ENCODE measurements at regions of chr1 and their contacts with region 1.

Region 1: DNA sequence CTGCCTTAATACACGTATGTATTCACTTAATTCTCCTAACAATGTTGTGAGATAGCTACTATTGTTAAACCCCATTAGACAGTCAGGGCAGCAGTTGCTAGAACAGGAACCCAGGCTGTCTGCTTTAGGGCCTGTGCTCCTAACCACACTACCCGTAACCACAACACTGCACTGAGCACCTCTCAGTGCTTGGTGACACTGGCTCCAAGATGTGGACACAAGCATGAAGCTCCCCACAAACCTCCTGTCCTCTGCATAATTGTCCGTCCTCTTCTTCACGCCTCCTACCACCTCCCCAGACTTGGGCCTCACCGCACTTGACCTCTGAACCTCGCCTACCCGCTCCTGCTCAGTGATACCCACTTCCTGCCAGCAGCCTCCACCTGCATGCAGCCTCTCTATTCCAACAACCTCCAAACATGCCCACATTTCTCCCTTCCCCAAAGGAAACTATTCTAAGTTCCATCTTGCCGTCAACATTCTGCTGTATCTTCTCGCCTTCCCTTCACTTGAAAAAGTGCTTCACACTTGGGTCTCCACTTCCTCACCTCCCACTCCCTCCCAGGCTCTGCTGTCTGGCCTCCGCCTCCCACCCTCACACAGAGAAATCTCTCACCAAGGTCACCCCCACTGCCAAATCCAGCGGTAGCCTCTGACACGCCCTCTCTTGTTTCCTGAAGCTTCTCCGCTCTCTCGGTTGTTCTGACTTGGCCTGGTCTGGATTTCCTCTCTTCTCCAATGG is 14.6 kb upstream of the AHDC1 start:
- DNase-seq: peak in 1 of 2 donors; percentile 83
- ATAC-seq: peak; percentile 77 to 92 (median 89)
- H3K4me3 ChIP-seq: no peak overlapping the region
- H3K4me3 Mint-ChIP-seq: peak overlapping the region; percentile 74
- H3K27ac ChIP-seq: peak overlapping the region; percentile 86
- H3K27ac Mint-ChIP-seq: peak overlapping the region in 1 of 2 donors; percentile 82
- H3K4me1 ChIP-seq: peaks cover 94% of the 10 kb centered on the region
- H3K4me1 Mint-ChIP-seq: peaks cover 60 to 75% of the 10 kb centered on the region in 2 donors
- H3K27me3 ChIP-seq: no peaks in the 10 kb centered on the region
- H3K27me3 Mint-ChIP-seq: no peaks in the 10 kb centered on the region
- CTCF ChIP-seq: no peak

Region 2: GRCh38 chr1:27568300-27569087 is 50.0 kb before region 1 on chr1:
- intact Hi-C with region 1: no loop called
- DNase-seq: peak; percentile 75 to 96
- ATAC-seq: peak; percentile 83 to 90 (median 84)
- H3K4me3 ChIP-seq: peak overlapping the region; percentile 22
- H3K4me3 Mint-ChIP-seq: peak overlapping the region; percentile 83
- H3K27ac ChIP-seq: peak overlapping the region; percentile 41
- H3K27ac Mint-ChIP-seq: peak overlapping the region; percentile 77 to 91
- H3K4me1 ChIP-seq: peaks cover 52% of the 10 kb centered on the region
- H3K4me1 Mint-ChIP-seq: peaks cover 50 to 74% of the 10 kb centered on the region in 2 donors
- H3K27me3 ChIP-seq: no peaks in the 10 kb centered on the region
- H3K27me3 Mint-ChIP-seq: no peaks in the 10 kb centered on the region
- CTCF ChIP-seq: peak; percentile 67

Region 3: GRCh38 chr1:27632387-27633297 is 14.1 kb after region 1 on chr1:
- intact Hi-C with region 1: loop called (anchors 2 kb)
- DNase-seq: peak in 1 of 2 donors; percentile 63
- ATAC-seq: peak; percentile 51 to 61 (median 57)
- H3K4me3 ChIP-seq: peak overlapping the region; percentile 71
- H3K4me3 Mint-ChIP-seq: peak overlapping the region; percentile 85
- H3K27ac ChIP-seq: peak overlapping the region; percentile 94
- H3K27ac Mint-ChIP-seq: peak overlapping the region; percentile 89 to 92
- H3K4me1 ChIP-seq: peaks cover 93% of the 10 kb centered on the region
- H3K4me1 Mint-ChIP-seq: peaks cover 64 to 87% of the 10 kb centered on the region in 2 donors
- H3K27me3 ChIP-seq: no peaks in the 10 kb centered on the region
- H3K27me3 Mint-ChIP-seq: no peaks in the 10 kb centered on the region
- CTCF ChIP-seq: no peak

Region 4: GRCh38 chr1:27928216-27928954 is 309.9 kb after region 1 on chr1:
- intact Hi-C with region 1: no loop called
- DNase-seq: no peak
- ATAC-seq: no peak
- H3K4me3 ChIP-seq: no peak overlapping the region
- H3K4me3 Mint-ChIP-seq: no peak overlapping the region
- H3K27ac ChIP-seq: no peak overlapping the region
- H3K27ac Mint-ChIP-seq: no peak overlapping the region
- H3K4me1 ChIP-seq: no peaks in the 10 kb centered on the region
- H3K4me1 Mint-ChIP-seq: peaks cover 0 to 4% of the 10 kb centered on the region in 2 donors
- H3K27me3 ChIP-seq: no peaks in the 10 kb centered on the region
- H3K27me3 Mint-ChIP-seq: peaks cover 0 to 4% of the 10 kb centered on the region in 2 donors
- CTCF ChIP-seq: no peak